Caco-2 (cell line): ENCODE measurements at regions of chr3 and their contacts with region 1.

Region 1: DNA sequence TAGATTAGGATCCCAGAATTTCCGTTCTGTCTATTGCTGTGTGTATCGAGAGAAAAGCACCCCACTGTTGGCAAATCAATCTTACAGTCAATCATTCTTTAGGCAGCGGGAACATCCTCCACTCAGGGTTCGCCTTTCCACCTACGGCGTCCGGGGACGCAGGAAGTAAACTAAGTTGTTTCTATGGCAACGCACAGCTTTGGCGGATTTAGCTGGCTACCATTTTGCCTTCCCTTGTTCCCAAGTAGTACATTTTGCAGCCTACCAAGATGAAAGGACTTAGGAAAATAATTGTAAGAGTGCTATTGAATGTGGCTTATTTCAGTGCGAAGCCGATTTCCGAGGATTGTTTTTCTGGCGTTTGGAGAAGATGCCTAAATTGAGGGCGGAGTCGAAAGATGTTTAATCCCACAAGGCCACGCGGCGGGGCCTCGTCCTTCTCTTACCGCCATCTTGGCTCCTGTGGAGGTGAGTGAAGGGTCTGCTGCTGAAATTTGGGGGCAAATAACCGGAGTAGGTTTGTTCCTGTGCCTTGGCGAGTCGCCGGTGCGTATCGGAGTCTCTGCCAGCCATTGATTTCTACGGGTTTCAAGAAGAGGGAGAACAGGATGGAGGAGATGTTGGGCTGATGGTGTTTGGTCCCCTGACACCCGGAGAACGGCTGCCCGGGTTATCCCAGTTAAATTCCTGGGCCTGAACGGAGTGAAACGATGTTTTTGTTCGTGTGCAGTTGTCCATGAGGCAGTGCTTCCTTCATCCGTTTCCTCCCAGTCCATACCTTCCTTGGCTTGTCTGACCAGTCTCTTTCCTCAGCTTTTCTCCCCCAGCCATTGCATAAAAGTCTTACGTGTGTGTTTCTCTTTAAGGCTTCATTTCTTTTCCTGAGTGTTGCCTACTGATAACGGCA is at the start of gene RPL35A:
- DNase-seq: peak; percentile 90 to 91
- H3K4me3 ChIP-seq: peak within 1 kb of the TSS; percentile 60
- H3K4me3 Mint-ChIP-seq: peak within 1 kb of the TSS; percentile 98
- H3K27ac Mint-ChIP-seq: peak within 1 kb of the TSS; percentile 100
- H3K4me1 ChIP-seq: peaks cover 8% of the 10 kb centered on the region; the same call in 1 of the 2 replicates
- H3K4me1 Mint-ChIP-seq: peaks cover 8% of the 10 kb centered on the region
- H3K27me3 ChIP-seq: no peaks in the 10 kb centered on the region
- H3K27me3 Mint-ChIP-seq: no peaks in the 10 kb centered on the region
- CTCF ChIP-seq: no peak
- total RNA-seq, gene RPL35A: 880 and 900 TPM in 2 replicates

Region 2: GRCh38 chr3:197912770-197913476 is 37.1 kb before region 1 on chr3:
- CTCF ChIA-PET with region 1: no interaction called
- POLR2A ChIA-PET with region 1: no interaction called
- intact Hi-C with region 1: no loop called
- DNase-seq: no peak
- H3K4me3 ChIP-seq: no peak overlapping the region
- H3K4me3 Mint-ChIP-seq: no peak overlapping the region
- H3K27ac Mint-ChIP-seq: no peak overlapping the region
- H3K4me1 ChIP-seq: no peaks in the 10 kb centered on the region
- H3K4me1 Mint-ChIP-seq: no peaks in the 10 kb centered on the region
- H3K27me3 ChIP-seq: no peaks in the 10 kb centered on the region
- H3K27me3 Mint-ChIP-seq: peaks cover 3% of the 10 kb centered on the region
- CTCF ChIP-seq: no peak

Region 3: GRCh38 chr3:197959898-197960693 is 10.1 kb after region 1 on chr3 and contains the start of gene LMLN:
- CTCF ChIA-PET with region 1: no interaction called
- POLR2A ChIA-PET with region 1: no interaction called
- intact Hi-C with region 1: loop called (anchors 1 kb)
- DNase-seq: peak; percentile 93 to 95
- H3K4me3 ChIP-seq: peak within 1 kb of the TSS; percentile 75
- H3K4me3 Mint-ChIP-seq: peak within 1 kb of the TSS; percentile 81
- H3K27ac Mint-ChIP-seq: peak within 1 kb of the TSS; percentile 86
- H3K4me1 ChIP-seq: peaks cover 15% of the 10 kb centered on the region
- H3K4me1 Mint-ChIP-seq: peaks cover 11% of the 10 kb centered on the region
- H3K27me3 ChIP-seq: no peaks in the 10 kb centered on the region
- H3K27me3 Mint-ChIP-seq: peaks cover 3% of the 10 kb centered on the region
- CTCF ChIP-seq: no peak
- total RNA-seq, gene LMLN: 2.4 and 2.5 TPM in 2 replicates

Region 4: GRCh38 chr3:197989651-197990050 is 39.6 kb after region 1 on chr3:
- CTCF ChIA-PET with region 1: no interaction called
- POLR2A ChIA-PET with region 1: no interaction called
- intact Hi-C with region 1: no loop called
- DNase-seq: no peak
- H3K4me3 ChIP-seq: no peak overlapping the region
- H3K4me3 Mint-ChIP-seq: no peak overlapping the region
- H3K27ac Mint-ChIP-seq: no peak overlapping the region
- H3K4me1 ChIP-seq: no peaks in the 10 kb centered on the region
- H3K4me1 Mint-ChIP-seq: no peaks in the 10 kb centered on the region
- H3K27me3 ChIP-seq: no peaks in the 10 kb centered on the region
- H3K27me3 Mint-ChIP-seq: no peaks in the 10 kb centered on the region
- CTCF ChIP-seq: no peak

Region 5: GRCh38 chr3:198071602-198072285 is 121.7 kb after region 1 on chr3:
- CTCF ChIA-PET with region 1: no interaction called
- POLR2A ChIA-PET with region 1: no interaction called
- intact Hi-C with region 1: no loop called
- DNase-seq: no peak
- H3K4me3 ChIP-seq: no peak overlapping the region
- H3K4me3 Mint-ChIP-seq: no peak overlapping the region
- H3K27ac Mint-ChIP-seq: no peak overlapping the region
- H3K4me1 ChIP-seq: no peaks in the 10 kb centered on the region
- H3K4me1 Mint-ChIP-seq: no peaks in the 10 kb centered on the region
- H3K27me3 ChIP-seq: no peaks in the 10 kb centered on the region
- H3K27me3 Mint-ChIP-seq: peaks cover 14% of the 10 kb centered on the region
- CTCF ChIP-seq: no peak

Region 6: GRCh38 chr3:198093112-198093679 is 143.2 kb after region 1 on chr3:
- CTCF ChIA-PET with region 1: no interaction called
- POLR2A ChIA-PET with region 1: no interaction called
- intact Hi-C with region 1: no loop called
- DNase-seq: no peak
- H3K4me3 ChIP-seq: no peak overlapping the region
- H3K4me3 Mint-ChIP-seq: no peak overlapping the region
- H3K27ac Mint-ChIP-seq: no peak overlapping the region
- H3K4me1 ChIP-seq: no peaks in the 10 kb centered on the region
- H3K4me1 Mint-ChIP-seq: no peaks in the 10 kb centered on the region
- H3K27me3 ChIP-seq: no peaks in the 10 kb centered on the region
- H3K27me3 Mint-ChIP-seq: peaks cover 9% of the 10 kb centered on the region
- CTCF ChIP-seq: no peak